H1 (cell line): ENCODE measurements at regions of chr1 and their contacts with region 1.

Region 1: GRCh38 chr1:48093696-48094528 is 96.7 kb upstream of the TRABD2B start:
- DNase-seq: peak; percentile 43 to 95
- H3K4me3 ChIP-seq: peak overlapping the region in 1 of 4 experiments; percentile 42; a peak in 1 of 8 replicates
- H3K27ac ChIP-seq: no peak overlapping the region
- H3K4me1 ChIP-seq: no peaks in the 10 kb centered on the region
- H3K27me3 ChIP-seq: peaks cover 0 to 4% (median 1%) of the 10 kb centered on the region in 4 experiments; a peak in 1 of 7 replicates
- CTCF ChIP-seq: peak; percentile 93 to 97 (median 97)
- EP300 ChIP-seq: no peak
- POLR2A ChIP-seq: no peak
- RAD21 ChIP-seq: peak; percentile 83 to 89

Region 2: GRCh38 chr1:47859092-47859743 is 234.7 kb before region 1 on chr1:
- CTCF ChIA-PET with region 1: no interaction called
- POLR2A ChIA-PET with region 1: no interaction called
- DNase-seq: no peak
- H3K4me3 ChIP-seq: no peak overlapping the region
- H3K27ac ChIP-seq: no peak overlapping the region
- H3K4me1 ChIP-seq: no peaks in the 10 kb centered on the region; a peak in 2 of 7 replicates
- H3K27me3 ChIP-seq: no peaks in the 10 kb centered on the region
- CTCF ChIP-seq: no peak
- EP300 ChIP-seq: no peak
- POLR2A ChIP-seq: no peak
- RAD21 ChIP-seq: no peak

Region 3: GRCh38 chr1:47934243-47934805 is 159.6 kb before region 1 on chr1:
- CTCF ChIA-PET with region 1: no interaction called
- POLR2A ChIA-PET with region 1: no interaction called
- DNase-seq: no peak
- H3K4me3 ChIP-seq: no peak overlapping the region
- H3K27ac ChIP-seq: no peak overlapping the region
- H3K4me1 ChIP-seq: peaks cover 0 to 3% (median 0%) of the 10 kb centered on the region in 4 experiments; a peak in 1 of 7 replicates
- H3K27me3 ChIP-seq: no peaks in the 10 kb centered on the region; a peak in 3 of 7 replicates
- CTCF ChIP-seq: no peak
- EP300 ChIP-seq: no peak
- POLR2A ChIP-seq: no peak
- RAD21 ChIP-seq: no peak; a peak in 1 of 4 replicates

Region 4: DNA sequence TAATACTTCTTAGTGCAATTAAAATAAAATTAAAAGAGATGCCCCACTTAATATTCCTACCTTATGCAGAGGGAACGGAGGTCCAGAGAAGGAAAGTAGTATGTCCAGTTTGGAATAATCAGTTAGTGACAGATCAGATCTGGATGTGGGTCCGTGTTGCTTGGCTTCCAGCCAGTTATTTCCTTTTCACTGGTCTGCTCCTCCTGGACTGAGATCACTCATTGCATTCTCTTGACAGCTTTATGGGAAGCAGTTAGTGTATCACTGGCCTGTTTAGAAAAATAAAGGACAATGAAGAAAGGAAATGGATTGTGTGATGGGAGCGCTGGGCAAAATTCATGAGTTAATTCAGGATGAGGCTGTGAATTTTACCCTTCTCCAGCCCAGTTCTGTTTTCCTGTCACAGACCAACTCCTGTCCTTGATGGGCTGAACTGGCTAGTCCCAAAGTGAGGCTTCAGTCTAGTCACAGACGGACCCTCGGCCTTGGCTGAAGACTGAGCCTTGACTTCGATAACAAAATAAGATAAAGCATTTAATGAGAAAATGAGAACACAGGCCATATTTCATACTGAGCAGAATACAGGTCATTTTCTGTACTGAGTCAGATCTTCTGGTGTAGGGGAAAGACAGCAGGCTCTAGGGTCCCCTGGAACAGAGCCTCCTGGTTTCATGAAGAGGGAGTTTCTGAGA is 11.5 kb before region 1 on chr1:
- CTCF ChIA-PET with region 1: interaction called, 11 read pairs
- POLR2A ChIA-PET with region 1: no interaction called
- DNase-seq: no peak
- H3K4me3 ChIP-seq: no peak overlapping the region
- H3K27ac ChIP-seq: no peak overlapping the region
- H3K4me1 ChIP-seq: no peaks in the 10 kb centered on the region
- H3K27me3 ChIP-seq: no peaks in the 10 kb centered on the region; a peak in 1 of 7 replicates
- CTCF ChIP-seq: no peak
- EP300 ChIP-seq: no peak
- POLR2A ChIP-seq: no peak
- RAD21 ChIP-seq: no peak